ENCODE measurements at regions of chr11 and their contacts with region 1.

Region 1: DNA sequence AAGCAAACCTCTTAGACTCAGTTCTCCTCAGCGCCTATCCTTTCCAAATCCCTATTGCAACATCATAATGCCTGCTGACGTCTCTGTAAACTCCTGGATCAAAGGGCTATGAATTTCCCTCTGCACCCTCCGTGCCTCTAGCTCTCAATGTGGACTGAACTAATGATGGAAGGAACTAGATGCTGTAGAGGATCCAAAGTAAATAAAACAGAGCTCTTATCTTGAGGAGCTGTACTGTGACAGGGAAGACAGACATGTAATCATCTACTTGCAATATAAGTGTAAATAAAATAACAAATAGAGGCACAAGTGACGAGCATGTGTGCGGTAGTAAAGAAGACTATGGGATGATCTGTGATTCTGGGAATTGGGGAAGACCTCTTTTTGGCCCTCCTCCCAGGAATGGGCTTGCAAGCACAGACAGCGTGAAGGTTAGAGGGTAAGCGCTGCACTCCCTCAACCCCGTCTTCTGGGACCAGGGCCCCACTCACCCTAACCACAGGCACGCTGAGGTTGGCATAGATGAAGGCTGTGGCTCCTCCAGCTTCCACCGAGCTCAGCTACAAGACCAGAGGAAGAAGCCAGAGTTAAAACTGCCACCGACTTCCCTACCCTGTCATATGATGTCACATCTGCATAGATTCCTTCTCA is 42.2 kb downstream of the P4HA3 start:
- DNase-seq: no peak
- CTCF ChIP-seq: no peak

Region 2: GRCh38 chr11:74237541-74237940 is 31.7 kb before region 1 on chr11:
- CTCF ChIA-PET with region 1: no interaction called
- POLR2A ChIA-PET with region 1: interaction called, 13 read pairs
- DNase-seq: no peak
- CTCF ChIP-seq: no peak